Activated naive CD4-positive, alpha-beta T cell treated with anti-CD3 and anti-CD28 coated beads for 36 hours (primary cell): ENCODE measurements at regions of chr13 and their contacts with region 1.

Region 1: GRCh38 chr13:20182231-20182846 is 10.4 kb downstream of the GJB2 start:
- DNase-seq: peak; percentile 54
- H3K4me3 Mint-ChIP-seq: no peak overlapping the region
- H3K27ac Mint-ChIP-seq: no peak overlapping the region
- H3K4me1 Mint-ChIP-seq: no peaks in the 10 kb centered on the region
- H3K27me3 Mint-ChIP-seq: peaks cover 30% of the 10 kb centered on the region

Region 2: GRCh38 chr13:20101484-20102316 is 80.6 kb before region 1 on chr13:
- CTCF ChIA-PET with region 1: no interaction called
- intact Hi-C with region 1: no loop called
- DNase-seq: no peak
- H3K4me3 Mint-ChIP-seq: no peak overlapping the region
- H3K27ac Mint-ChIP-seq: no peak overlapping the region
- H3K4me1 Mint-ChIP-seq: no peaks in the 10 kb centered on the region
- H3K27me3 Mint-ChIP-seq: peaks cover 28% of the 10 kb centered on the region

Region 3: DNA sequence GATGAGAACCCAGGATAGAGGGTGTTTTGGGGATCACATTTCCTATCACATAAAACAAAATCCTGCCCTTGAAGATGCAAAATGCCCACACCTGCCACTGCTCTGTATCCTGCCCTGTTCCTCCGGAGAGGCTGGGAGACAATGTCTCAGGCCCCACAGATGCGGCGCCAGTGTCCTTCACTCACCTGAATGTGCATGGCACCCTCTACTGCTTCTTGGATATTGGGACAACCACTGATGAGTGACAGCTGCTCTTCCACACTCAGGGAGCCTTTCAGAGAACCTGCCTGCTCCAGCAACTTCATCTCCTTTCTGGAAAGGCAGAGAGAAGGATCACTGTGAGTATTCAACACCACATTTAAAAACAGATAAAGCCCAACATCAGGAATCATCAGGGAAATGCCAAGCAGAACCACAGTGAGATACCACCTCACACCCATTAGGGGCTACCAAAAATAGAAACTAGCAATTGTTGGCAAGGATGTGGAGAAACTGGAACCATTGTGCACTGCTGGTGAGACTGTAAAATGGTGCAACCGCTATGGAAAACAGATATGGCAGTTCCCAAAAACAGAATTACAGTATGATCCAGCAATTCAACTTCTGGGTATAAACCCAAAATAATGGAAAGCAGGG is 307.0 kb after region 1 on chr13:
- CTCF ChIA-PET with region 1: interaction called, 7 read pairs
- intact Hi-C with region 1: loop called (anchors 1 kb)
- DNase-seq: peak; percentile 30
- H3K4me3 Mint-ChIP-seq: no peak overlapping the region
- H3K27ac Mint-ChIP-seq: no peak overlapping the region
- H3K4me1 Mint-ChIP-seq: no peaks in the 10 kb centered on the region
- H3K27me3 Mint-ChIP-seq: no peaks in the 10 kb centered on the region